ENCODE measurements at regions of chr11 and their contacts with region 1.

Region 1: DNA sequence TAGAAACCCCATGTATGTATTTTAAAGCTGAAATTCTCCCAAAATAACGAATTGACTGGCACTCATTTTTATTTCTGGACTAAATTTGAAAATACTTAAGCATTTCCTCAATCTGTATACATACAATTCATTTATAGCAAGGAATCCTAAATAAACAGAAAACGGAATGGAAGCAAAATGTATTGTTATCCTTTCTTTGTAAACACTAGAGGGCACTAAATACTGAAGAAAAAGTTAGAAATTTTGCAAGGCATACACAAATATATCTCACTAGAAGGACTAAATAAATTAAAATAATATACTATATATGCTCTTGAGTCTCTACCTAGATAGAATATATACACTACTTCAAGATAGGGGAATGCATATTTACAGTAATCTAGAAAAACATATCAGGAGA is 23.1 kb upstream of the ANO5 start:
- DNase-seq: no peak
- H3K4me3 ChIP-seq: no peak overlapping the region
- H3K4me3 Mint-ChIP-seq: no peak overlapping the region
- H3K27ac Mint-ChIP-seq: no peak overlapping the region
- H3K4me1 ChIP-seq: no peaks in the 10 kb centered on the region
- H3K4me1 Mint-ChIP-seq: no peaks in the 10 kb centered on the region
- H3K27me3 ChIP-seq: no peaks in the 10 kb centered on the region
- H3K27me3 Mint-ChIP-seq: peaks cover 3% of the 10 kb centered on the region
- CTCF ChIP-seq: peak; percentile 10 to 32

Region 2: GRCh38 chr11:22065472-22065871 is 104.4 kb before region 1 on chr11:
- CTCF ChIA-PET with region 1: no interaction called
- POLR2A ChIA-PET with region 1: no interaction called
- intact Hi-C with region 1: no loop called
- DNase-seq: no peak
- H3K4me3 ChIP-seq: no peak overlapping the region
- H3K4me3 Mint-ChIP-seq: no peak overlapping the region
- H3K27ac Mint-ChIP-seq: no peak overlapping the region
- H3K4me1 ChIP-seq: no peaks in the 10 kb centered on the region
- H3K4me1 Mint-ChIP-seq: no peaks in the 10 kb centered on the region
- H3K27me3 ChIP-seq: no peaks in the 10 kb centered on the region
- H3K27me3 Mint-ChIP-seq: no peaks in the 10 kb centered on the region
- CTCF ChIP-seq: no peak

Region 3: DNA sequence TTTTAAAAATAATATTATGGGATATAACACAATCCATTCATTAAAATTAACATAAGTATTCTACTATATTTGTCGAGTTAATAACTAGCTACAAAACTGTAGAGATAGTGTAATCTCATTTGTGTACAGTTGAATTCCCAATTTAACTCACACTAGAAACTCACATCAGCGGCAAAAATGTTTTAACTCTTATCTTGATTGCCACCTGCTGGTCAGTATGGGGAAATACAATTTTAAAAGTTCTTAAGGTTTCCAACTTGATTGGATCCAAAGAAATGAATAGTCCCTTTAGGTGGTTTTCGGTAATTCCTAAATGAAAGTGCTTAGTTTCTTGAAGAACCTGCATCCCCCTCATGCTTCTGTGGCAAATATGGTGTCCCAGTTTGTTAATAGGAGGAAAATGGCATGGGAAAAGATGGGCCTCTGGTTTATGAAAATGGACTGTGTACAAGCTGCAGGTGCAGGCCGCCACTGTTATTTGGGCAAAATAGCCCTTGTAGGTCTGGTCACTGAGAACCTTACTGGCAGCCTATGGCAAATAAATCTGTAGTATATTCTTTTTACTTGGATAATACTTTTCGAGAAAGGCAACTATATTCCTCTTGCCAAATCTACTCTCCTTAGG is 134.6 kb after region 1 on chr11:
- CTCF ChIA-PET with region 1: interaction called, 3 read pairs
- POLR2A ChIA-PET with region 1: no interaction called
- intact Hi-C with region 1: loop called (anchors 1 kb)
- DNase-seq: no peak
- H3K4me3 ChIP-seq: no peak overlapping the region
- H3K4me3 Mint-ChIP-seq: no peak overlapping the region
- H3K27ac Mint-ChIP-seq: no peak overlapping the region
- H3K4me1 ChIP-seq: no peaks in the 10 kb centered on the region
- H3K4me1 Mint-ChIP-seq: no peaks in the 10 kb centered on the region
- H3K27me3 ChIP-seq: no peaks in the 10 kb centered on the region
- H3K27me3 Mint-ChIP-seq: peaks cover 3% of the 10 kb centered on the region
- CTCF ChIP-seq: peak; percentile 53 to 75

Region 4: DNA sequence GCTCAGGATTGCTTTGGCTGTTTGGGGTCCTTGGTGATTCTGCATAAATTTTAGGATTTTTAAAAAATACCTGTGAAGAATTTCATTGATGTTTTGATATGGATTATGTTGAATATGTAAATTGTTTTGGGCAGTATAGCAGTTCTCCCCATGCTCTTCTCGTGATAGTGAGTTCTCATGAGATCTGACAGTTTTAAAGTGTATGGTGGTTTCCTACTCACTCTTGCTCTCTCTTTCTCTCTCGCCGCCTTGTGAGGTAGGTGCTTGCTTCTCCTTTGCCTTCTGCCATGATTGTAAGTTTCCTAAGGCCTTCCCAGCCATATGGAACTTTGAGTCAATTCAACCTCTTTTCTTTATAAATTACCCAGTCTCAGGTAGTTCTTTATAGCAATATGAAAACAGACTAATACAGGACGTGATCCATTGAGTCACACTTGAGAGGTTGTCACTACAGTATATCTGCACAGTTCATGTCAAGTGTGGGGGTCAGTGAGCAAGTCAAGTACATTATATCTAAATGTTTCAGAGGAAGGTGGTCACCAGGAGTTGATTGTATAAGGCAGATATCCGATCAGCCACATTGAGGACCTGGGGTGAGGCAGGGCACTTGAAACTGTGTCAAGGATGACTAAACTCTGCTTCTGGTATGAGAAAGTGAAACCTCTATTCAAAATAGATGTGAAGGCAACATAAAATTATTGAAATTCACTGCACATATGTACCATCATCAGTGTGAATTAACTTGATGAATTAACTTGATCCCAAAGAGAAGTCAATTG is 761.2 kb after region 1 on chr11:
- CTCF ChIA-PET with region 1: no interaction called
- POLR2A ChIA-PET with region 1: no interaction called
- intact Hi-C with region 1: no loop called
- DNase-seq: no peak
- H3K4me3 ChIP-seq: no peak overlapping the region
- H3K4me3 Mint-ChIP-seq: no peak overlapping the region
- H3K27ac Mint-ChIP-seq: no peak overlapping the region
- H3K4me1 ChIP-seq: no peaks in the 10 kb centered on the region; the same call in 1 of the 2 replicates
- H3K4me1 Mint-ChIP-seq: peaks cover 6% of the 10 kb centered on the region
- H3K27me3 ChIP-seq: no peaks in the 10 kb centered on the region
- H3K27me3 Mint-ChIP-seq: peaks cover 4% of the 10 kb centered on the region
- CTCF ChIP-seq: no peak

Region 5: GRCh38 chr11:23143022-23143421 is 973.2 kb after region 1 on chr11:
- CTCF ChIA-PET with region 1: no interaction called
- POLR2A ChIA-PET with region 1: interaction called, 10 read pairs
- intact Hi-C with region 1: no loop called
- DNase-seq: no peak
- H3K4me3 ChIP-seq: no peak overlapping the region
- H3K4me3 Mint-ChIP-seq: no peak overlapping the region
- H3K27ac Mint-ChIP-seq: no peak overlapping the region
- H3K4me1 ChIP-seq: no peaks in the 10 kb centered on the region
- H3K4me1 Mint-ChIP-seq: no peaks in the 10 kb centered on the region
- H3K27me3 ChIP-seq: no peaks in the 10 kb centered on the region
- H3K27me3 Mint-ChIP-seq: peaks cover 3% of the 10 kb centered on the region
- CTCF ChIP-seq: no peak